ENCODE measurements at regions of chr7 and their contacts with region 1.

Region 1: GRCh38 chr7:135170274-135170997 is at the start of gene CYREN:
- DNase-seq: peak; percentile 98
- ATAC-seq: peak; percentile 97
- total RNA-seq, gene CYREN: 22.5 TPM

Region 2: DNA sequence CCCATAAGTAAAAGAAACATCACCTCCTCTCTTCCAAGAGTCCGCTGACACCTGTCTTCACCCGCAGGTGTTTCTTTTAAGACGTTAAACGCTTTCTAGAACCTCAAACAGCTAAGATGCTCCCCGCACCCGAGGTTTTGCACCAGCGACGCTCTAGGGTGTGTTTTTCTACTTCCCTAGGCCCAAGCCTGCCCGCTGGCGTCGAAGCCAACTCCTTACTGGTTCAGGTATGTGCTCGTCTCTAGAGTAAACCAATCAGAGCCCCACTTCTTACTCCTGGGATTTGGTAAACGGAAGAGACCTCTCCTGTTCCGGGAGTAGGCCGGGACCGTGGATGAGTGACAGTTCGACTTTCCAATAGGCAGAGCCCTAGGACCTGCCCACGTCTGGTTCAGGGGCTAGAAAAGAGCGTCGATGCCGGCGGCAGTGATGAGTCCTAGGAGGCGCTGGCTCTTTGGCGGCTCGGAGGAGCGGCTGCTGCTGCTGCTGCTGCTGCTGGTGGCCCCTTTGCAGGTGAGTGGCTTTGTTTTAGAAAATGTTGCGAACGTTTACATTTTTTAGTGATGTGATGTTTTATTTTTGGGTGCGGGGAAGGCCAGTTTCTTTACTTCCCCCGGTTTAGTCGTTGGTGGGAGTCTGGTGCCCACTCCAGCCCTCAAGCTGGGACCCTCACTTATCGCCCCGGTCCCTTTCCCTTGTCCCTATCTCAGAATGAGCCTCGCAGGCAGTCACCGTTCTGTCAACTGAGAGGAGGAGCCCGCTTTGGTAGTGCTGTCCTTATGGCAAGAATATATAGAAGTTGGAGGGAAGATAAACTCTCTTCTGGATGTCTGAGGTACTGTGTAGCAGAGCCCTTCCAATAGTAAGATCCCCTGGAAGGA is 523.8 kb before region 1 on chr7 and contains the start of gene BPGM:
- intact Hi-C with region 1: loop called (anchors 10 kb)
- DNase-seq: peak; percentile 96
- ATAC-seq: peak; percentile 100
- total RNA-seq, gene BPGM: 14.0 TPM

Region 3: DNA sequence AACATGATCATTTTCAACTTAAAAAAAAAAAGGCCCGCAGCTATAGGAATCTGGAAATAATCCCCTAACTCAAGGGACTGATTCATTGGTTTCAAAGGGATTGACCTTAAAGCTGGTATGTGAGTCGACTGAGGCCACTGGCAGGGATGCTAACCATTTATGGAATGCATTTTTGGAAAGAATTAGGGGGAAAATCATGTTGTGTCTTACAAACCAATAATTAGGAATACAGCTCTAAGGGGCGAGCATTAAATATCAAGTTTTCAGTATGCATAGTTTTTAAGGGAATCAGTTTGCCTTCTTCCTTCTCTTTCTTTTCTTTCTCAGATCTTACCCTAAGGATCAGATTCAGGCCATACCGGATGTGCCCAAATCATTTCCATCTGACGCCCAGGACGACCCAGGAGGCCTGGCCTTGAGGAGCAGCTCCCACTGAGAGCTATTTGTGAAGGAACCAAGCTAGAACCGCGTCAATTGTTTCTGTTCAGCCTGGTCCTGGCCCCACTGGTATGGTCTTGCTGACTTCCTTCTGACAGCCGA is 475.0 kb before region 1 on chr7:
- intact Hi-C with region 1: loop called (anchors 5 kb)
- DNase-seq: no peak
- ATAC-seq: no peak

Region 4: DNA sequence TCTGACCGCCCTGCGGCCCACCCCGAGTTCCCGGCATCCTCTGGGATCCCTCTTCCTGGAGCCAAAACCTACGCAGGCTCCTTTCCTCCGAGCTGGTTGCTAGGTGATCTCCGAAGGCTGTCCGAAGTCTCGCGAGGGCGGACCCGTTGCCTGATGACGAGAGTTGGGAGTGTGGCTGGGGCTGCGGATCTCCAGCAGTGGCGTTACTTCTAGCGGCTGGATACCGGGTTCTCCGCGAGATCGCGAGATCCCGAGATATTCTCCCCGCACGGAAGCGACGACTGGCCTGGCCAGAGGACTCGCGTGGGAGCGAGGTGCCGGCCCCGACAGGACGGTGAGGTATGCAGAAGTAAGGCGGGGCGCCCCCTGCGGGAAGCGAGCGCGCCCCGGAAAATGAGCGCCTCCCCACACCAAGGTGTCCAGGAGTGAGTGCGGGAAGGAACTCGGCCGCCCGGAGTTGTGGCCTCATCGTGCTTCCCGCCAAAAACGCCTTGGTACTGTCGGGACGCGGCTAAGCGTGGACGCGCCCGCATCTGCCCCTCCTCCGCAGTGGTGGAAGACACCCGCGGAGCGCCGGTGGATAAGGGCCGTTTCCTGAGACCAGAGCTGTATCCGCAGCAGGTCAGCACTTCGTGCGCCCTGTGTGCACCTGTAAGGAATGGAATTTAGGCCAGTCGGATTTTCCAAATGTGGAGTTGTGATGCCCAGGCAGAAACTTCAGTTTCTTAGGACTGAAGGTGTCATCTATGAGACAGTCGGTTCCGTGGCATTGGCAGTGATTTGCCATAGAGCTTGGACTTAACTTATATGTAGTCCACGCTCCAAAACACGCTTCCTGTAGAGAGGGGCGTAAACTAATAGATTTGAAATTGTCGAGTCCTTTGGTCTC is 183.8 kb before region 1 on chr7 and contains the start of gene AGBL3:
- intact Hi-C with region 1: loop called (anchors 1 kb)
- DNase-seq: peak; percentile 99
- ATAC-seq: peak; percentile 98
- total RNA-seq, gene AGBL3: 2.2 TPM

Measured in Right ventricle myocardium inferior (tissue), 1 donor.